ENCODE measurements at regions of chr7 and their contacts with region 1.

Region 1: DNA sequence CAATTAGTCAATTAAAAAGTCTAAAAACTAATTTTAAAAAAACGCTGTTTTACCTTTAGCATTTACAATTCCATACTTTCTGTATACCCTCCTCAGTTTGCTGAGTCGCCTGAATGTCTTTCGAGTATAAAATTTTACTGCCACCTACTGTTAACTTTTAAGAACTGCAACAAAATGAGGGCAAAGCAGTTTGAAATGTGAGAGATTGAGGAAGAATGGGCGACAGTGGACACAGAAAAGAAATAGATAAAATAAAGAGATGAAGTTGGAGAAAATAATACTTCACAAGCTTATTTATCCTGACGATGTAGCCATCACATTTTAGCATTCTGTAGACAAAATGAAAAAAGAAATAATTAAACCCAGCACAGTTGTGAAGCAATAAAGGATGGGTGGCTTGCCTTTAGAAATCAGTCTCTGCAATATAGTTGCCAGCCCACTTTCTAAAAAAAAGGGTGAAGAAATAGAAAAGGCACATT is 110.8 kb upstream of the PTN start:
- DNase-seq: no peak
- ATAC-seq: peak in 7 of 8 donors; percentile 51 to 86 (median 66)
- H3K4me3 ChIP-seq: peak overlapping the region in 4 of 10 donors; percentile 17 to 21 (median 20)
- H3K27ac ChIP-seq: peak overlapping the region in 8 of 10 donors; percentile 18 to 71 (median 56)
- H3K4me1 ChIP-seq: peaks cover 0 to 20% (median 7%) of the 10 kb centered on the region in 9 donors
- H3K27me3 ChIP-seq: no peaks in the 10 kb centered on the region
- CTCF ChIP-seq: peak; percentile 45 to 80 (median 71)

Region 2: DNA sequence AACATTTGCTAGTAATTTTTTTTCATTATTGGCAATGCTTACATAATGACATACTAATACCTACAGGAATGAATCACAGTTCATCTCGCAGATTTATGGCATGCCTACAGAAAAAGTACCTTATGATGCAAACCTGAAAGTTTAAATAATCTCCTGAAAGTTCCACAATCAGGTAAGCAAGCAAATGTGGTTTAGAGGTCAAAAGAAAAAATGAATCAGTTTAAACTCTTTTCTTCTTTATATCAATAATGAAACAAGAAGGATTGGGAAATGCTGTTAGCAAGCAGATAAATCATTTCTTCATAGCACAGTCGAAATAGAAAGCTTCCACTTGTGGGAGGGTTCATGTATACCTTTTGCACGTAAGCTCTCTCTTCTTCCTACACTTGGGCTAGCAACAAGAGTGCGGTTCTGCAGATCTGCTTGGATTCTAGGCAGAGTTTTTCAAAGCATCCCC is 1423.4 kb before region 1 on chr7:
- intact Hi-C with region 1: loop called in 1 of 10 experiments (anchors 10 kb)
- DNase-seq: no peak
- ATAC-seq: no peak
- H3K4me3 ChIP-seq: no peak overlapping the region
- H3K27ac ChIP-seq: no peak overlapping the region
- H3K4me1 ChIP-seq: peaks cover 0 to 22% (median 9%) of the 10 kb centered on the region in 9 donors
- H3K27me3 ChIP-seq: no peaks in the 10 kb centered on the region
- CTCF ChIP-seq: no peak

Region 3: GRCh38 chr7:136266457-136266856 is 1187.8 kb before region 1 on chr7:
- intact Hi-C with region 1: no loop called
- DNase-seq: no peak
- ATAC-seq: no peak
- H3K4me3 ChIP-seq: no peak overlapping the region
- H3K27ac ChIP-seq: no peak overlapping the region
- H3K4me1 ChIP-seq: no peaks in the 10 kb centered on the region
- H3K27me3 ChIP-seq: no peaks in the 10 kb centered on the region
- CTCF ChIP-seq: no peak

Region 4: DNA sequence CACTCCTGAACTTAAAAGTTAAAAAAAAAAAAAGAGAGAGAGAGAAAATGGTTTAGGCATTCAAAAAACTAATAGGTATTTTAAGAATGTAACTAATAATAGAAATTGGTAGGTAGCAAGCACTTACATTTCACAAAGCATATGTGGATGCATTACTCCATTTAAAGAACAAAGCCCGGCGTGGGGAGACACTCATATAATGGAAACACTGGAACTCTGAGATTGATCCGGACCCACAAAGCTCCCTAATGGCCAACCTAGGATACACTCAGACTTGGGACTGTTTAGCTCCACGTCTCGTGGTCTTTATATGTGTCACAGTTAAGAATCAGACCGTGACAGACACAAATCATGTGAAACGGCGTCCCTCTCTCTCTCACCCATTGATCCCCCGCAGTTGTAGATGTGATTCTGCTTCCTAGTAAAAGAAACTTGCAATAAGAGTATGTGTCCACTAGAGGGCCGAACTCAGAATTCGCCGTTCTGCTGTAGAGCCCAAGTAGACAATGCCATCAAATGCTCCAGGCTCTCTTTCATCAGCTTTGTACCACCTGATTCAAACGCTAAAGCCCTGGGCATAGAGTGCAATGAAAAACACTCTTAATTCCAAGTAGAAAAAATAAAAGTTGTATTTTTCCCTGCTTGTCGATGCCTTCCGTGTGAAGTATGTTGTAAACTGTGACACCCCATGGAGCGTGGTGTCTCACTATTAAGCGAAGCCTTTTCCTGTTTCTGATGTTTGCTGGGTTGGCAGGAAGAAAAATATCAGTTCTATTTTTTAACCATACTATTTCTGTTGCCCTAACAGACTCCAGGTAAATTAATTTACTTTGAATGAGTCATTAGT is 1048.1 kb before region 1 on chr7:
- intact Hi-C with region 1: loop called in 2 of 10 experiments (anchors 10 kb)
- DNase-seq: peak in 1 of 2 donors; percentile 20
- ATAC-seq: peak in 6 of 8 donors; percentile 33 to 73 (median 61)
- H3K4me3 ChIP-seq: peak overlapping the region in 1 of 10 donors; percentile 9
- H3K27ac ChIP-seq: no peak overlapping the region
- H3K4me1 ChIP-seq: no peaks in the 10 kb centered on the region
- H3K27me3 ChIP-seq: peaks cover 0 to 4% (median 0%) of the 10 kb centered on the region in 7 donors
- CTCF ChIP-seq: peak; percentile 38 to 79 (median 75)

Region 5: GRCh38 chr7:137169282-137169698 is 285.0 kb before region 1 on chr7:
- intact Hi-C with region 1: loop called in 8 of 10 experiments (anchors 2 to 10 kb)
- DNase-seq: peak; percentile 26 to 57
- ATAC-seq: peak; percentile 65 to 83 (median 72)
- H3K4me3 ChIP-seq: no peak overlapping the region
- H3K27ac ChIP-seq: no peak overlapping the region
- H3K4me1 ChIP-seq: peaks cover 0 to 4% (median 0%) of the 10 kb centered on the region in 9 donors
- H3K27me3 ChIP-seq: no peaks in the 10 kb centered on the region
- CTCF ChIP-seq: peak; percentile 36 to 78 (median 61)

Region 6: DNA sequence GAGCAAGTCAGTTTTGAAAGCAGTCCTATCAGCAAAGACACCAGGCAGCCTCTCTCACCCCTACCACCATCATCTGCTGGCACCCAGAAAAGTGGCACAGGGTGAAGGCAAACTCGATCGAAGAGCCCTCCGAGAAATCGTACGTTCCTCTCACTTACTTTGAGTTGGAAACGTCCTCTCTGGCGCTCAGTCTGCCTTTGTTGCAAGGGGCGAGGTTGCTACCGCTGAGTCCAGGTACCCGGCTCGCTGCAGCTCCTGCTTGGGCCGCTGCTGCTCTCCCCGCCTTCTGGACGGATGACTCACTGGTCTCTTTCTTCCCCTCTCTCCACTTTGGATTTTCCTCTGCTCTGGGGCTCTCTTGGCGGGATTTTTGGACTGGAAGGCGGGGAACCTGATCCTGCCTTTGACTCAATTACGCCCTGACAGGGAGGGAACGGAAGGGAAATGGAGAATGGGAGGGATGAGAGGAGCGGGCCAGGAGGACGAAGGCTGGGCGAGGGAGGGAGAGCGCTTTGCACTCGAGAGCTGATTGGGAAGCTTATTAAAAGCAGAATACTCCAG is 110.9 kb before region 1 on chr7 and contains the start of gene PTN:
- intact Hi-C with region 1: loop called in 2 of 10 experiments (anchors 10 kb)
- DNase-seq: peak; percentile 27 to 38
- ATAC-seq: peak; percentile 80 to 93 (median 86)
- H3K4me3 ChIP-seq: peak within 1 kb of the TSS; percentile 12 to 60 (median 51)
- H3K27ac ChIP-seq: peak within 1 kb of the TSS in 3 of 10 donors; percentile 15 to 23 (median 17)
- H3K4me1 ChIP-seq: peaks cover 0 to 6% (median 0%) of the 10 kb centered on the region in 9 donors
- H3K27me3 ChIP-seq: peaks cover 0 to 8% (median 0%) of the 10 kb centered on the region in 7 donors
- CTCF ChIP-seq: no peak
- total RNA-seq, gene PTN: 6.6 to 22.4 (median 12.9) TPM

Region 7: DNA sequence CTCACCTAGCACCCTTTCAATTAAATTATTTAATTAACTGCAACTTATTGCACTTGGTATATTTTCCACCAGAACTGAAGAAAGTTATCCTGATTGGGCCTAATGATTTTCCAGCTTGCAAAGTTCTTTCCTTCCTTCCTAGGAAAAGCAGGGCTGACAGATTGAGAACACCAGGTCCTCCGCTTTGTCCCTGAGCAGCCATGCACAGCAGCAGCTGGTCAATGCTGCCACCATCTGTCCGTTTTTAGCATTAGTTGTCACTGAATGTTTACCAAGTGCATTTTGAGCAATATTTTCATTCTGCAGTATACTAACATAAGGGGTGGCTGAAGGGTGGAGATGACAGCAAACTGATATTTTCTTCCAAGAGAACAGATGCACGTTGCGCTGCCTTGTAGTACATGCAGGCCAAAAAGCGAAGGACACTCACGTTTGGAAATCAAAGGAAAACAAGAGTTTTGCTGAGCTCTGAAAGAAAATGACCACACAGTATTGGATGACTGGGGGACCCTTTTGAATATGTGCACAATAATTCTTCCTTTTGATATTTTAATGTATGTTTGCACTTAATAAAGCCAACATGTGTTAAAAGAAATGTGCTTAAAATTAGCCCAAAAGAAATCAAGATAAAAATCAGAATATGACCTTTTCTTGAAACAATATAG is 138.1 kb after region 1 on chr7:
- intact Hi-C with region 1: loop called in 3 of 10 experiments (anchors 10 kb)
- DNase-seq: peak; percentile 28 to 55
- ATAC-seq: peak; percentile 73 to 93 (median 85)
- H3K4me3 ChIP-seq: no peak overlapping the region
- H3K27ac ChIP-seq: no peak overlapping the region
- H3K4me1 ChIP-seq: peaks cover 0 to 11% (median 7%) of the 10 kb centered on the region in 9 donors
- H3K27me3 ChIP-seq: no peaks in the 10 kb centered on the region
- CTCF ChIP-seq: peak; percentile 42 to 83 (median 72)